ENCODE measurements at regions of chr10 and their contacts with region 1.

Region 1: DNA sequence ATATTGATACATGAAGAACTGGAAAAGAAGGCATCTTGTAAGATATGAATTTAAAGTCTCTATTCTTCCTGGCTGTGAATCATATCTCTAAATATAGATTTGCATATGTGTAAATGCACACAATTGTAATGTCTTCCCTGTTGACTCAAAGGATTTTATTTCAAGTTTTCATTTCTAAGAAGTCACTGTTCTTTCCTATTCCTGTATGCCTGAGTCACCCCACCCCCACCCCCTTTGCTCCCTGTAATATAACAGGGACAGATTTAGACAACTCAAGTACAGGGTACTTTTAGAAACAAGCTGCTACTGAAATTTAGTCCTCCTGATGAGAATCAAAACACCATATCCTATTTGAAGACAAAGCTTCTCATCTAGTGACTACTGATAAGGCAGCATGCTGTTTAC is 43.0 kb upstream of the HECTD2 start:
- DNase-seq: no peak
- H3K4me3 ChIP-seq: no peak overlapping the region
- H3K27ac ChIP-seq: no peak overlapping the region
- H3K4me1 ChIP-seq: peaks cover 9% of the 10 kb centered on the region
- H3K27me3 ChIP-seq: no peaks in the 10 kb centered on the region
- CTCF ChIP-seq: no peak
- POLR2A ChIP-seq: no peak

Region 2: DNA sequence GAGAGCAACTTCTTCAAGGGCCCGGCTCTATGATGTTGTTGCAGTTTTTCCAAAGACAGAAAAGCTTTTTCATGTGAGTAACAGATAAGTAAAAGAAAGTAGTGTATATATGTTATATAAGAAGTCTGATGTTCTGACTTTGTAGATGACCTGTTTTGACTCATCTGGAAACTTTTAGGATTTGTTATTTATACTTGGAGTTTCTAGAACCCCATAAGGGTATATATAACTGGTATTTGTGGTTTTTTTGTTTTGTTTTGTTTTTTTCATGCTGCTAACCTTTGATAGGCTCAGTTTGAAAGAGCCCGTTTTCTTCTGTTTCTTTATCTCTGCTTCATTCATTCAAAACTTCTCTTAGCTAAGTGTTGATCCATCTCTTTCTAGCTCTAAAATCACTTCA is 488.1 kb before region 1 on chr10:
- CTCF ChIA-PET with region 1: interaction called, 12 read pairs
- POLR2A ChIA-PET with region 1: no interaction called
- dilution Hi-C with region 1: no loop called
- intact Hi-C with region 1: no loop called
- DNase-seq: no peak
- H3K4me3 ChIP-seq: no peak overlapping the region
- H3K27ac ChIP-seq: no peak overlapping the region
- H3K4me1 ChIP-seq: no peaks in the 10 kb centered on the region
- H3K27me3 ChIP-seq: no peaks in the 10 kb centered on the region
- CTCF ChIP-seq: no peak
- POLR2A ChIP-seq: no peak

Region 3: DNA sequence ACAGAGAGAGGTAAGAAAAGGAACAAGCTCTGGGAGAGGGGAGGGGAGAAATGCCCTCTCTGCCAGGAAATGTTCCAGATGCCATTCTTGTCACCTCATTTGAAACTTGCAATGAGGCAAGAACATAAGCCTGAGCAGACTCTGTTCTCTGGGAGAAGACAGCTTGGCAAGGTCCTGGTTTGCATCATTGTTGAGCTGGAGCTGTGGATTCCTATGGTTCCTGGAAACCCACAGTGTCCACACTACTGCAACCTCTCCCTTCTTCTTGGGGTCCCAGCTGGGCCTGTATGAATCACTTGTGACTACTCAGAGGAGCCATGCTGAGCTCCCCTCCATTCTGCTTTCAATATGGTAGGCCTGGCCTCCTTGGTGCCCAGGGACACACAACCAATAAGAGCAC is 17.7 kb before region 1 on chr10:
- CTCF ChIA-PET with region 1: interaction called, 17 read pairs
- POLR2A ChIA-PET with region 1: no interaction called
- dilution Hi-C with region 1: no loop called
- intact Hi-C with region 1: no loop called
- DNase-seq: peak; percentile 57
- H3K4me3 ChIP-seq: no peak overlapping the region
- H3K27ac ChIP-seq: peak overlapping the region; percentile 70
- H3K4me1 ChIP-seq: peaks cover 21% of the 10 kb centered on the region
- H3K27me3 ChIP-seq: no peaks in the 10 kb centered on the region
- CTCF ChIP-seq: no peak
- POLR2A ChIP-seq: no peak

Region 4: DNA sequence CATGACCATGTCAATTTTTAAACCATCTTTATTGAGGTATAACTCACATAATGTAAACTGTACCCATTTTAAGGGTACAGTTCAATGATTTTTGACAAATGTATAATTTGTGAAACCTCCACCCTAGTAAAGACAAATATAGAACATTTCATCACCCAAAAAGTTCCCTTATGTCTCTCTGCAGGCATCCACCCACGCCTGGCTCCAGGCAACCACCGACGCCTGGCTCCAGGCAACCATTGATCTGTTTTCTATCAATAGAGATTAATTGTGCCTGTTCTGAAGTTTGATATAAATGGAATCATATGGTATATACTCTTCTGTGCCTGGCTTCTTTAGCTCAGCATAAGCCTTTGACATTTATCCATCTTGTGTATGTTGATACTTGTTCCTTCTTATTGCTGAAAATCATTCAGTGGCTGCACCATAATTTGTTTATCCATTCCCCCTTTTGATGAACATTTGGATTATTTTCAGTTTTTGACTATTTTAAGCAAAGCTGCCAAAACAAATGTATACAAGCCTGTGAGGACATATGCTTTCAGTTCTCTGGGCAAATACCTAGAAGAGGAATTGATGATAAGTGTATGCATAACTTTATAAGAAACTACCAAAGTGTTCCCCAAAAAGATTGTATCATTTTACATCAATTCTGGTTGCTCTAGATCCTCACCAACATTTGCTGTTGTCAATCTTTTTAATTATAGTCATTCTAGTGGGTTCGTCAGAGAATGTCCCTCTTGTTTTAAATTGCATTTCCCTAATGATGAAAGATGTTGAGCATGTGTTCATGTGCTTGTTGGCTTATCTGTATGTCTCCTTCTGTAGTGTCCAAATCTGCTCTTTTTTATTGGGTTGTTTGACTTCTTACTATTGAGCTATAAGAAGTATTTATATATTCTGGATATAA is 12.7 kb before region 1 on chr10:
- CTCF ChIA-PET with region 1: interaction called, 17 read pairs
- POLR2A ChIA-PET with region 1: no interaction called
- dilution Hi-C with region 1: no loop called
- intact Hi-C with region 1: no loop called
- DNase-seq: no peak
- H3K4me3 ChIP-seq: no peak overlapping the region
- H3K27ac ChIP-seq: no peak overlapping the region
- H3K4me1 ChIP-seq: peaks cover 8% of the 10 kb centered on the region
- H3K27me3 ChIP-seq: peaks cover 8 to 16% of the 10 kb centered on the region in 2 experiments
- CTCF ChIP-seq: no peak
- POLR2A ChIP-seq: no peak

Region 5: GRCh38 chr10:91381257-91381891 is 14.2 kb after region 1 on chr10:
- CTCF ChIA-PET with region 1: interaction called, 16 read pairs
- POLR2A ChIA-PET with region 1: no interaction called
- dilution Hi-C with region 1: no loop called
- intact Hi-C with region 1: no loop called
- DNase-seq: no peak
- H3K4me3 ChIP-seq: no peak overlapping the region
- H3K27ac ChIP-seq: no peak overlapping the region
- H3K4me1 ChIP-seq: peaks cover 3% of the 10 kb centered on the region
- H3K27me3 ChIP-seq: peaks cover 13 to 35% of the 10 kb centered on the region in 2 experiments
- CTCF ChIP-seq: no peak
- POLR2A ChIP-seq: no peak

Region 6: GRCh38 chr10:91493313-91493712 is 126.2 kb after region 1 on chr10:
- CTCF ChIA-PET with region 1: no interaction called
- POLR2A ChIA-PET with region 1: no interaction called
- dilution Hi-C with region 1: no loop called
- intact Hi-C with region 1: no loop called
- DNase-seq: peak; percentile 24
- H3K4me3 ChIP-seq: no peak overlapping the region
- H3K27ac ChIP-seq: no peak overlapping the region
- H3K4me1 ChIP-seq: no peaks in the 10 kb centered on the region
- H3K27me3 ChIP-seq: no peaks in the 10 kb centered on the region
- CTCF ChIP-seq: no peak
- POLR2A ChIP-seq: no peak